Esophagus muscularis mucosa (tissue), 4 donors: ENCODE measurements at regions of chr9 and their contacts with region 1.

Region 1: GRCh38 chr9:36407122-36407723 is 7.2 kb upstream of the RNF38 start:
- DNase-seq: no peak
- H3K4me3 ChIP-seq: no peak overlapping the region
- H3K27ac ChIP-seq: peak overlapping the region in 2 of 4 donors; percentile 7 to 33
- H3K4me1 ChIP-seq: peaks cover 5 to 11% (median 9%) of the 10 kb centered on the region in 4 donors
- H3K27me3 ChIP-seq: no peaks in the 10 kb centered on the region
- CTCF ChIP-seq: peak; percentile 95
- EP300 ChIP-seq: no peak
- POLR2A ChIP-seq: no peak

Region 2: GRCh38 chr9:36450110-36450732 is 43.0 kb after region 1 on chr9:
- intact Hi-C with region 1: loop called (anchors 2 kb)
- DNase-seq: no peak
- H3K4me3 ChIP-seq: no peak overlapping the region
- H3K27ac ChIP-seq: no peak overlapping the region
- H3K4me1 ChIP-seq: peaks cover 0 to 24% (median 13%) of the 10 kb centered on the region in 4 donors
- H3K27me3 ChIP-seq: no peaks in the 10 kb centered on the region
- CTCF ChIP-seq: peak; percentile 61 to 73 (median 73)
- EP300 ChIP-seq: no peak
- POLR2A ChIP-seq: no peak

Region 3: DNA sequence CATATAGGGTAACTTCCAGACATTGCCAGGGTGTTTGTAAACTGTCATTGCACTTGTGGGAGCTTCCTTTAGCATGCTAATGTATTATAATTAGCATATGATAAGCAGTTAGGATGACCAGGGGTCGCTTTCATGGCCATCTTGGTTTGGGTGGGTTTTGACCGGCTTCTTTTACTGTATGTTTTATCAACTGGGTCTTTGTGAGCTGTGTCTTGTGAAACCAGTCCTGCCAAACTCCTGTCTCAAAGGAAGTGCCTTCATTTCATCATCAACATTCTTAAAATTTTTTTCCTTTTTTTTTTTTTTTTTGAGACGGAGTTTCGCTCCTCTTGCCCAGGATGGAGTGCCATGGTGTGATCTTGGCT is 153.6 kb after region 1 on chr9:
- intact Hi-C with region 1: loop called (anchors 1 kb)
- DNase-seq: no peak
- H3K4me3 ChIP-seq: no peak overlapping the region
- H3K27ac ChIP-seq: no peak overlapping the region
- H3K4me1 ChIP-seq: peaks cover 0 to 3% (median 0%) of the 10 kb centered on the region in 4 donors
- H3K27me3 ChIP-seq: no peaks in the 10 kb centered on the region
- CTCF ChIP-seq: no peak
- EP300 ChIP-seq: no peak
- POLR2A ChIP-seq: no peak

Region 4: GRCh38 chr9:36922548-36922947 is 515.3 kb after region 1 on chr9:
- intact Hi-C with region 1: no loop called
- DNase-seq: no peak
- H3K4me3 ChIP-seq: no peak overlapping the region
- H3K27ac ChIP-seq: no peak overlapping the region
- H3K4me1 ChIP-seq: no peaks in the 10 kb centered on the region
- H3K27me3 ChIP-seq: peaks cover 0 to 35% (median 0%) of the 10 kb centered on the region in 4 donors
- CTCF ChIP-seq: no peak
- EP300 ChIP-seq: no peak
- POLR2A ChIP-seq: no peak